ENCODE measurements at regions of chr18 and their contacts with region 1.

Region 1: GRCh38 chr18:8367217-8367988 is 241.8 kb upstream of the RAB12 start:
- DNase-seq: peak in 8 of 10 donors; percentile 26 to 74 (median 54)
- H3K4me3 ChIP-seq: peak overlapping the region; percentile 13 to 67 (median 46)
- H3K27ac ChIP-seq: peak overlapping the region in 9 of 59 donors; percentile 6 to 60 (median 28)
- H3K27me3 ChIP-seq: no peaks in the 10 kb centered on the region
- CTCF ChIP-seq: peak in 54 of 56 donors; percentile 32 to 79 (median 58)

Region 2: DNA sequence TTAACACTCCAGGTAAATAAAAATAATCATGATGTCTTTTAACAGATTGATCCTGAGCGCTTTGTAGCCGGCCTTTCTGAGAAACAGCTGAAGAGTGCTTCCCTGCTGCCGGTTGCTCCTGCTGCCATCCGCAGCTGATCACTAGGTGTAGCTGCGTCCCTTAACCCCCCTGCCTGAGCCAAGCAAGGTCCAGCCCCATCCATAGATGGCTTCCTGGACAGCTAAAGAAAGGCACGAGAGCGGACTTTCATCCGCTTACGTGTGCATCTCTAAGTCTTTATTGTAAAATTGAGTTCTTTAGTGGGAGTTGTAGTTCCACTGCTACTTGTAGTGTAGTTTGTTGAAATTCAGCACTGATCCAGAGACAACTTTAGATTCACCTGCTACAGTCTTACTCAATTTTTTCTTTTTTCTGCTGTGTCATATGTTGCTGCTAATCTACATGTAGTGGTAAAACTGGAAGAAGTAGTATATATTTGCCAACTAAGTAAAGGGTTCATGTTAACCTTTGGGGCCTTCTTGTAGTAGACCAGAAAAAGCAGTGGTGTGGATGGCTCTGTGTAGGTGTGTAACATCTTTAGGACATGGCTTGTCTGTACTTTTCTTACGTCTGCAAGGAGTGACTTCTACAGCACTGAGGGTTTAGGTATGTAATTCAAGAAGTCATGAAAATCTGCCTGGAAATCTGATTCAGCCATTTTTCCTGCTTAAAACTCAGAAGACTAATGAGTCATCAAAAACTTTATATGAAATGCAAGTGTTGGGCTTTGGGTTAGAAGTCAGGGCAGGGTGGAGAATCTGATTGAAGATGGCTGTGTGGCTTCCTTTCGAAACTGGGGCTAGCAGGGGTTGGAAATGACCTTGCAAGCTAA is 792.0 kb before region 1 on chr18:
- intact Hi-C with region 1: loop called in 1 of 2 experiments (anchors 10 kb)
- DNase-seq: no peak
- H3K4me3 ChIP-seq: no peak overlapping the region
- H3K27ac ChIP-seq: no peak overlapping the region
- H3K27me3 ChIP-seq: no peaks in the 10 kb centered on the region
- CTCF ChIP-seq: no peak

Region 3: GRCh38 chr18:8324343-8325065 is 42.9 kb before region 1 on chr18:
- intact Hi-C with region 1: no loop called
- DNase-seq: no peak
- H3K4me3 ChIP-seq: no peak overlapping the region
- H3K27ac ChIP-seq: no peak overlapping the region
- H3K27me3 ChIP-seq: no peaks in the 10 kb centered on the region
- CTCF ChIP-seq: no peak